ENCODE measurements at regions of chr5 and their contacts with region 1.

Region 1: GRCh38 chr5:34743878-34744277 is 87.8 kb downstream of the RAI14 start:
- DNase-seq: peak; percentile 20
- H3K4me3 ChIP-seq: no peak overlapping the region
- H3K27ac ChIP-seq: no peak overlapping the region
- H3K4me1 ChIP-seq: no peaks in the 10 kb centered on the region
- H3K27me3 ChIP-seq: no peaks in the 10 kb centered on the region
- CTCF ChIP-seq: no peak

Region 2: GRCh38 chr5:34699155-34700077 is 44.5 kb before region 1 on chr5:
- CTCF ChIA-PET with region 1: no interaction called
- dilution Hi-C with region 1: loop called (anchors 5 kb)
- in situ Hi-C with region 1: no loop called
- intact Hi-C with region 1: no loop called
- DNase-seq: no peak
- H3K4me3 ChIP-seq: no peak overlapping the region
- H3K27ac ChIP-seq: no peak overlapping the region
- H3K4me1 ChIP-seq: no peaks in the 10 kb centered on the region
- H3K27me3 ChIP-seq: no peaks in the 10 kb centered on the region
- CTCF ChIP-seq: no peak